ENCODE measurements at regions of chr11 and their contacts with region 1.

Region 1: GRCh38 chr11:76318744-76319384 is 62.1 kb downstream of the THAP12 start:
- DNase-seq: peak; percentile 87
- ATAC-seq: peak; percentile 86 to 89

Region 2: GRCh38 chr11:75797792-75798191 is 521.1 kb before region 1 on chr11:
- intact Hi-C with region 1: loop called in 1 of 2 experiments (anchors 10 kb)
- DNase-seq: no peak
- ATAC-seq: no peak

Region 3: GRCh38 chr11:76207642-76208401 is 111.0 kb before region 1 on chr11:
- intact Hi-C with region 1: loop called (anchors 2 kb)
- DNase-seq: peak; percentile 84
- ATAC-seq: peak; percentile 71 to 80

Measured in left cardiac atrium (tissue), 4 donors.